Heart left ventricle (tissue), 16 donors: ENCODE measurements at regions of chr2 and their contacts with region 1.

Region 1: DNA sequence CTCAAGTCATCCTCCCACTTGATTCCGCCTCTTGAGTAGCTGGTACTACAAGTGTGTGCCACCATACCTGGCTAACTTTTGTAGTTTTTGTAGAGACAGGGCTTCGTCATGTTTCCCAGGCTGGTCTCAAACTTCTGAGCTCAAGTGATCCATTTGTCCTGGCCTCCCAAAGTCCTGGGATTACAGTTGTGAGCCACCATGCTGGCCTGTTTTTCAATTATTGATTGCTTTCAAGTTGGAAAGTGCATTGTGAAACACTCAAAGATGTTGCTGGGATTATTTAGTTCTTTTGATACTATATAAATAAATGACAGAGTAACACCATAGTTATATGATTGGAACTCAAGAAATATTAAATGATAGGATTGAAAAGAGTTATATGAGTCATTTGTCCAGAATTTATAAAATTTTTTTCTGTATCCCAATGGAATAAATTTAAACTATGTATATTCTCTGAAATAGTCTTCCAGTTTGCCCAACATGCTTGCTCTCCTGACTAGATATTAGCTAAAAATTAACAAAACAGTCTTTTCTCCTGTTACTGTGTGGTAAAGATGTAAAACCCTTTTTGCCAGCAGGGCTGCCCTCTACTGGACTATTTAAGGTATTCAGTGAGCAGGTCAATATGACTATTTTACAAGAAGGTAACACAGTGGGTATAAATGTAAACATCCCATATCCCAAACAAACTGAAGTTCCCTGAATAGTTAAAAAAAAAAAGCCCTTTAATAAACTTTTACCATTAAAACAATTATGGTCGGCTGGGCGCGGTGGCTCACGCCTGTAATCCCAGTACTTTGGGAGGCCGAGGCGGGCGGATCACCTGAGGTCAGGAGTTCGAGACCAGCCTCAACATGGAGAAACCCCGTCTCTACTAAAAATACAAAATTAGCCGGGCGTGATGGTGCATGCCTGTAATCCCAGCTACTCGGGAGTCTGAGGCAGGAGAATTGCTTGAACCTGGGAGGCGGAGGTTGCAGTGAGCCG is 42.7 kb downstream of the ACSL3 start:
- DNase-seq: no peak
- ATAC-seq: peak; percentile 38 to 67 (median 58)
- H3K4me3 ChIP-seq: no peak overlapping the region
- H3K27ac ChIP-seq: no peak overlapping the region
- H3K4me1 ChIP-seq: peaks cover 0 to 77% (median 19%) of the 10 kb centered on the region in 12 donors
- H3K27me3 ChIP-seq: no peaks in the 10 kb centered on the region
- CTCF ChIP-seq: peak; percentile 56 to 82 (median 72)
- POLR2A ChIP-seq: no peak

Region 2: DNA sequence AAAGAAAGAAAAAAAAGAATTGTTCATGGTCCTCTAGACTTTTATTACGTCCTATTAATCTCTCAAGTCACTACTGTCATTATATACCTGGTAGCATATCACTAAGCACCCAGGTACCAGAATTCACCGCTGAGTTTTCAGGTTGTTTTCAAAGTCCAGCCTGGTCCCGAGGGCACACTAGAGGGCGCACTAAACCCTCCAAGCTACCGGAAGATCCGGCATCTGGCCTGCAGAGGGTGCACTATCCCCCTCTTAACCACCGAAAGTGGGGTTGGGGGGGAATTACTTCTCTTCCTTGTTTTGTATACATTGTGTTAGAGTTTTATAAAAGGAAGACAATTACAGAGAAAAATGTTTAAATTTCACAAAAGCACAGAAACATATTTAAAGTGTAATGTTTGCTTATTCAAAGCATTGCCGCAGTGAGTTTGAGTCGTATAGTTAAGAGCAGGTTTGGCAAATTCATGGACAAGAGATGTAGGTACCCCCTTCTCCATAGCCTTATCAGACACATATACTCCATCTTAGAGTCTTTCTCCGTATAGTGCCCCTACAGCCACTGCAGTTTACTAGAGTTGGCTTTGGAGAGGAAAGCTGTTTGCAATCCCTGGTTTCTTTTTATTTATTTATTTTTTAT is 212.8 kb before region 1 on chr2:
- intact Hi-C with region 1: loop called in 3 of 10 experiments (anchors 5 kb)
- DNase-seq: peak; percentile 53 to 78 (median 62)
- ATAC-seq: peak in 3 of 4 donors; percentile 77 to 86 (median 84)
- H3K4me3 ChIP-seq: no peak overlapping the region
- H3K27ac ChIP-seq: no peak overlapping the region
- H3K4me1 ChIP-seq: peaks cover 0 to 17% (median 1%) of the 10 kb centered on the region in 12 donors
- H3K27me3 ChIP-seq: no peaks in the 10 kb centered on the region
- CTCF ChIP-seq: peak; percentile 86 to 100 (median 96)
- POLR2A ChIP-seq: no peak

Region 3: GRCh38 chr2:222797261-222797660 is 106.3 kb before region 1 on chr2:
- intact Hi-C with region 1: loop called (anchors 2 to 10 kb)
- DNase-seq: no peak
- ATAC-seq: peak in 1 of 4 donors; percentile 42
- H3K4me3 ChIP-seq: no peak overlapping the region
- H3K27ac ChIP-seq: peak overlapping the region in 5 of 12 donors; percentile 19 to 61 (median 30)
- H3K4me1 ChIP-seq: peaks cover 0 to 37% (median 23%) of the 10 kb centered on the region in 12 donors
- H3K27me3 ChIP-seq: no peaks in the 10 kb centered on the region
- CTCF ChIP-seq: peak in 10 of 12 donors; percentile 28 to 55 (median 46)
- POLR2A ChIP-seq: no peak

Region 4: DNA sequence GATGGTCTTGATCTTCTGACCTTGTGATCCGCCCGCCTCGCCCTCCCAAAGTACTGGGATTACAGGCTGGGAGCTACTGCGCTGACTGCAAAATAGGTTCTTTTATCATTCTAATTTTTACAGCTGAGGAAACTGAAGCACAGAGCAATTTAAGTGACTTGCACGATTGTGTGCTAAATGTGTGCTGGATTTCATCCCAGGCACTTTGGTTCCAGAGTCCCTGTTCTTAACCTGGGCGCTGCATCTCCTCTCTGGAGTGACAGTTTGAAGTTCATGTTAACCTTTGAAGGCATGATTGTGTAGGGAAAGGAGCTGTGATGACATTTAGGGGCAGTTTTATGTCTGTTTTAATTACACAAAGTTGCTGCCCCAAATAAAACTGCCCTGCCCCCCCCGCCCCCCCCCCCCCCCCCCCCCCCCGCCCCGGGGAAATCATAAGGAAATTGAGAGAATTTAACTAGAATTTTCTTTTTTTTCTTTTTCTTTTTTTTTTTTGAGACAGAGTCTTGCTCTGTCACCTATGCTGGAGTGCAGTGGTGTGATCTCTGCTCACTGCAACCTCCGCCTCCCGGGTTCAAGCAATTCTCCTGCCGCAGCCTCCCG is 37.1 kb before region 1 on chr2:
- intact Hi-C with region 1: loop called in 5 of 10 experiments (anchors 2 to 5 kb)
- DNase-seq: peak in 3 of 5 donors; percentile 20 to 58 (median 52)
- ATAC-seq: peak in 3 of 4 donors; percentile 18 to 77 (median 47)
- H3K4me3 ChIP-seq: no peak overlapping the region
- H3K27ac ChIP-seq: peak overlapping the region in 6 of 12 donors; percentile 4 to 57 (median 33)
- H3K4me1 ChIP-seq: peaks cover 12 to 92% (median 63%) of the 10 kb centered on the region in 12 donors
- H3K27me3 ChIP-seq: no peaks in the 10 kb centered on the region
- CTCF ChIP-seq: no peak
- POLR2A ChIP-seq: no peak

Region 5: DNA sequence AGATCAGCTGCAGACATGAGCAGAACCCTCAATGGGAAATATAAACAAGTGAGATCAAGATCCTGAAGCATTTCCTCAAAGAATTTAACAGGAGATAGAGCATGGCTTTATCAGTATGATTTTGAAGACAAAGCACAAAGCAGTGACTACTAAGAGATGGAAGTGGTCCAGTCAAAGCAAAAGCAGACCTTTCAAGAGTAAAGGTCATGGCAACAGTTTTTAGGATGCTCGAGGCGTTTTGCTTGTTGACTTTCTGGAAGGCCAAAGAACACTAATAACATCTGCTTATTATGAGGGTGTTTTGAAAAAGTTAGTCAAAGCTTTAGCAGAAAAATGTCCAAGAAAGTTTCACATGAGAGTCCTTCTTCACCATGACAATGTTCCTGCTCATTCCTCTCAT is 276.9 kb after region 1 on chr2:
- intact Hi-C with region 1: no loop called
- DNase-seq: no peak
- ATAC-seq: no peak
- H3K4me3 ChIP-seq: no peak overlapping the region
- H3K27ac ChIP-seq: no peak overlapping the region
- H3K4me1 ChIP-seq: peaks cover 0 to 7% (median 0%) of the 10 kb centered on the region in 12 donors
- H3K27me3 ChIP-seq: no peaks in the 10 kb centered on the region
- CTCF ChIP-seq: no peak
- POLR2A ChIP-seq: no peak